Ascending aorta (tissue), 2 donors: ENCODE measurements at regions of chr6 and their contacts with region 1.

Region 1: GRCh38 chr6:153618805-153619215 is 420.2 kb upstream of the OPRM1 start:
- DNase-seq: no peak
- H3K4me3 ChIP-seq: no peak overlapping the region
- H3K27ac ChIP-seq: peak overlapping the region in 1 of 2 donors; percentile 9
- H3K4me1 ChIP-seq: peaks cover 4 to 18% of the 10 kb centered on the region in 2 donors
- H3K27me3 ChIP-seq: no peaks in the 10 kb centered on the region
- CTCF ChIP-seq: no peak

Region 2: DNA sequence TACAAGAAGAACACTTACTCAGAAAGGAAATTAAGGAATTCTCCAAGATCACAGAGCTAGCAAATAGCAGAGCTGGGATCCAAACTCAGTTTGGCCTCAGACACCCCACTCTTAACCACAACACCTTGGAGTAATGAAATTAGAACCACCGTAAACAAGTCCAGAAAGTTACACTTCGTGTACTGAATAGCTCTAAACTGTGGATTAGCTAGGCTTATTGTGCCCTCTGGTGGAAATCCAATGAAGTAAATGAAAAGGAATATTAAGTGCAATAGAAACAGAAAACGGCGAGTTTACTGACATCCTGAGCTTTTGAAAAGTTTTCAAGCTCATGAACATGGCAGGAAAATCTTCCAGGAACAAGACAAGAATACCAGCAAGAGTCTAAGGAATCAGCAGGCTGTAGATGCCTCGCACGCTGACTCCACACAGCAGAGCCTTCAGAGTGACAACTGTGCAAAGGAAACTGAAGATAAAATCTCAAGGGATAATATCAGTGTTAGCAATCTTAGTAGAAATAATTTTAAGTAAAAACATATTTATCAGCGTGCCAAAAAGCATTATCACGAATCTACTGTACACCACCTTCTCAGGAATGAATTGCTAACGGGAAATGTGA is 670.6 kb before region 1 on chr6:
- intact Hi-C with region 1: no loop called
- DNase-seq: no peak
- H3K4me3 ChIP-seq: peak overlapping the region in 1 of 2 donors; percentile 26
- H3K27ac ChIP-seq: no peak overlapping the region
- H3K4me1 ChIP-seq: no peaks in the 10 kb centered on the region
- H3K27me3 ChIP-seq: no peaks in the 10 kb centered on the region
- CTCF ChIP-seq: peak; percentile 25 to 75 (median 44)

Region 3: DNA sequence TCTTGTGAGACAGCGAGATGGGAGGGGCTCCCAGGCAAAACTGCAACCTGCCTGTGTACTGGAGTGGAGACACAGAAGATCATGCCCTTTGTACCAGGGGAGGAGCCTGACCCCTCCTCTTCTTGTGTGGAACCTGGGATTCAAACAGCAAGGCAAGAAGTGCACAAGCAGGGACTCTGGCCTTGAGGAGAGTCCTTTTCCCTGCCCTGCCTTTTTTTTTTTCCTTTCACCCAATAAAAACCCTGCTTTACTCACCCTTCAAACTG is 168.5 kb after region 1 on chr6:
- intact Hi-C with region 1: loop called (anchors 10 kb)
- DNase-seq: no peak
- H3K4me3 ChIP-seq: no peak overlapping the region
- H3K27ac ChIP-seq: peak overlapping the region in 1 of 2 donors; percentile 70
- H3K4me1 ChIP-seq: peaks cover 0 to 8% of the 10 kb centered on the region in 2 donors
- H3K27me3 ChIP-seq: no peaks in the 10 kb centered on the region
- CTCF ChIP-seq: no peak